HepG2 (cell line): ENCODE measurements at regions of chr17 and their contacts with region 1.

Region 1: DNA sequence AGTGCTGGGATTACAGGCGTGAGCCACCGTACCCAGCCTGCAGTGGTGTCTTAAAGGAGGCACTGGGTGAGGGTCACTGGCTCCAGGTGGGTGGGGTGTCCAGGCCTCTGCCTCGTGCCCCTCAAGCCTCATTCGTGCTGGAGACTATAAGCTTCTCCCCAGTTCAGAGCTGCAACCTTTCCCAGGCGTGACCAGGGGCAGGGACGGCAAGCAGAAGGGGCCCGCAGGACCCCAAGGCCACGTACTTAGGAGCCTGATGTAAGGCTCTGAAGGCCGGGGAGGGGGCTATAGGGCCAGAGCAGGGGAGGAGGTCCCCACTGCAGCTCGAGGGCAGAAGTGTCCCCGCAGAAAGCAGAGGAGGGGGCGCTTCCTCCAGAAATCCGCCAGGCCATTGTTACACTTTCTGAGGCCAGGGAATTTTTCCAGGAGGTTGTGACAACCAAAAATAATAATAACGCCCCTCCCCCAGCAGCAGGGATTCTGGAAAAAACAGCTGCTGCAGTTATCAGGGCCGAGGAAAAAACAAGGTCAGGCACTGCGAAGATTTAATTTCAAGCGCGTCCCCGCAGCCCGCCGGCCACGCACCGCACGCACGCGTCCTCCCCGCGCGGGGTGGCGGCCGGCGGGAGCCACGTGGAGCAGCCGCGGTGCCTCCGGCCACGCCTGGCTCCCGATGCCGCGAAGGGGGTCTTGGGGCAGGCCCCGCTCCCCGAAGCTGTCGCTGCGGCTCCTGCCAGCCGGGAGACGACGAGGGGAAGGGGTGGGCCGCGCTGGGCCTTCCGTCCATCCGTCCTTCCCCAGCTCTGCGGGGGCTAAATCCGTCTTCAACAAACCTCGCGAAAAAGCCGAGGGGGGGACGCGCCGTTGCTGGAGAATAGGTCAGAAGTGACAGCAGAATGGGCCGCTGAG is 45.8 kb upstream of the SLC38A10 start:
- DNase-seq: no peak
- ATAC-seq: no peak
- H3K4me3 ChIP-seq: peak overlapping the region in 2 of 3 experiments; percentile 6 to 83; a peak in 1 of 6 replicates
- H3K27ac ChIP-seq: peak overlapping the region; percentile 37
- H3K4me1 ChIP-seq: peaks cover 83% of the 10 kb centered on the region
- H3K27me3 ChIP-seq: peaks cover 0 to 40% of the 10 kb centered on the region in 2 experiments; a peak in 4 of 5 replicates
- CTCF ChIP-seq: no peak
- EP300 ChIP-seq: no peak
- POLR2A ChIP-seq: no peak
- RAD21 ChIP-seq: no peak

Region 2: GRCh38 chr17:81287741-81288430 is 53.0 kb before region 1 on chr17:
- CTCF ChIA-PET with region 1: no interaction called
- POLR2A ChIA-PET with region 1: no interaction called
- in situ Hi-C with region 1: no loop called
- intact Hi-C with region 1: no loop called
- DNase-seq: no peak
- ATAC-seq: no peak
- H3K4me3 ChIP-seq: no peak overlapping the region
- H3K27ac ChIP-seq: no peak overlapping the region
- H3K4me1 ChIP-seq: 0 out of 2 replicates have a peak, but pooled peaks cover 4% of the 10 kb centered on the region
- H3K27me3 ChIP-seq: no peaks in the 10 kb centered on the region
- CTCF ChIP-seq: no peak
- EP300 ChIP-seq: no peak
- POLR2A ChIP-seq: no peak
- RAD21 ChIP-seq: no peak

Region 3: DNA sequence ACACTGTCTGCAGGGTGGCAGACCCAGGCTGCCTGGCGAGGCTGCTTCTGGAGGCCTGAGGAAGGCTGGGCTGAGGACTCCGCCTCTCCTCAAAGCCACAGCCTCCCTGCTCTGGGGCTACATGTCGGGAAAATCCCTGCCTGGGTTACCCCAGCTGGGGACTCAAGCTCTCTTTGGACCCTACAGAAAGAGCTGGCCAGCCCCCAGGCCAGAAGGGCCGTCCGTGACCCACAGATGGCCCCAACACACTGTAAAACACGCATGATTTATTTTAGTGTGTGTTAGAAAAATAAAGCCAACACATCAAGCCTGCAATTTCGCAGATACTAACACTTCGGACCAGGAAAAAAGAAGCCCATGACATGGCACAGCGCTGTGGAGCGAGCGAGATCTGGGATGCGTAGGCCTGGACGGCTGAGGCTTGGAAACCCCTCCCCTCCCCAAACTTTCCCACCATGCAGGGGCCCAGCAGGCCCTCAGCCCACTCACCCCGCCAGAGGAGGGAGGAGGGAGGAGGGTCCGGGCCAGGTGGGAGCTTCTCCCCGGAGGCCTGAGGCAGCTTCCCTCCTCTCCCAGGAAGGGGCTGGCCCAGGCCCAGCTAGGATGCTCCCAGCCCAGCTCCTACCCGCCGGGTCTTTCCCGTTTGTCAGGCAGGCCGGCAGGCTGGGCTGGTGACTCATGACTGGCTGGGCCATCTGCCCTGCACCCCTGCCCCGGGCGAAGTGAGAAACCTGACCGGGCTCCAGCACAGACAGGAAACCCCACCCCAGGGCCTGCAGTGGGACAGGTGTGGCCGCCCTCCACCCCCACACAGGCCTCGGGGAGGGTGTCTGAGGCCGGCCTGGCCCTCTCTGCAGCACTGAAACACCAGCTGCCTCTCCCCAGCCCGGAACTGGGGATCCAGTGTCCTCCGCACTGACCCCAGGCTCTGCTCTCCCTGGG is 11.6 kb before region 1 on chr17:
- CTCF ChIA-PET with region 1: no interaction called
- POLR2A ChIA-PET with region 1: interaction called, 10 read pairs
- in situ Hi-C with region 1: no loop called
- intact Hi-C with region 1: no loop called
- DNase-seq: peak; percentile 79
- ATAC-seq: peak; percentile 81
- H3K4me3 ChIP-seq: peak overlapping the region; percentile 38 to 72 (median 45); a peak in 5 of 6 replicates
- H3K27ac ChIP-seq: no peak overlapping the region
- H3K4me1 ChIP-seq: peaks cover 77% of the 10 kb centered on the region
- H3K27me3 ChIP-seq: peaks cover 18 to 78% of the 10 kb centered on the region in 2 experiments
- CTCF ChIP-seq: peak; percentile 35
- EP300 ChIP-seq: no peak
- POLR2A ChIP-seq: no peak
- RAD21 ChIP-seq: no peak

Region 4: DNA sequence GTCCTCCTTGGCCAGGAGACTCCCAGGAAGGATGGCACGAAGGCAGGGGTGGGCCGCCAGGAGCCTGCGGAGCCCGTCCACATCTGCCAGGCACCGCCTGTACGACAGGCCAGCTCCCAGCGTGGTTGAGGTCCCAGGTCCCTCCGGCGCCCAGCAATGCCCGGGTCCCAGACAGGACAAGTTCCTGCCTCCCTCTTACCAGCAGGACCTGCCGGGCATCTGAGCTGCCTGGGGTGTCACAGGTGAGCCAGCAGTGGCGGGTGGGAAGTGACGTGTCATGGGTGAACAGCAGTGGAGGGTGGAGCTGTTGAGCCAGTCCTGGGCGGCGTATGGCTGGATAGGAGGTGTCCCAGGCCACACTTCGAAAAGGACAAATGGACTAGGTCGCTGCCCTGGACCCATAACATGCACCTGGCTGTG is 38.7 kb after region 1 on chr17:
- CTCF ChIA-PET with region 1: no interaction called
- POLR2A ChIA-PET with region 1: no interaction called
- in situ Hi-C with region 1: no loop called
- intact Hi-C with region 1: no loop called
- DNase-seq: no peak
- ATAC-seq: peak; percentile 47
- H3K4me3 ChIP-seq: peak overlapping the region in 1 of 3 experiments; percentile 10; a peak in 1 of 6 replicates
- H3K27ac ChIP-seq: no peak overlapping the region
- H3K4me1 ChIP-seq: peaks cover 3% of the 10 kb centered on the region; the same call in 1 of the 2 replicates
- H3K27me3 ChIP-seq: peaks cover 14 to 72% of the 10 kb centered on the region in 2 experiments
- CTCF ChIP-seq: peak; percentile 41
- EP300 ChIP-seq: no peak
- POLR2A ChIP-seq: no peak
- RAD21 ChIP-seq: no peak